Heart right ventricle (tissue), 16 donors: ENCODE measurements at regions of chr21 and their contacts with region 1.

Region 1: GRCh38 chr21:38798481-38798882 is 7.2 kb upstream of the ETS2 start:
- DNase-seq: no peak
- ATAC-seq: no peak
- H3K4me3 ChIP-seq: no peak overlapping the region
- H3K27ac ChIP-seq: no peak overlapping the region
- H3K4me1 ChIP-seq: no peaks in the 10 kb centered on the region
- H3K27me3 ChIP-seq: no peaks in the 10 kb centered on the region
- CTCF ChIP-seq: no peak

Region 2: DNA sequence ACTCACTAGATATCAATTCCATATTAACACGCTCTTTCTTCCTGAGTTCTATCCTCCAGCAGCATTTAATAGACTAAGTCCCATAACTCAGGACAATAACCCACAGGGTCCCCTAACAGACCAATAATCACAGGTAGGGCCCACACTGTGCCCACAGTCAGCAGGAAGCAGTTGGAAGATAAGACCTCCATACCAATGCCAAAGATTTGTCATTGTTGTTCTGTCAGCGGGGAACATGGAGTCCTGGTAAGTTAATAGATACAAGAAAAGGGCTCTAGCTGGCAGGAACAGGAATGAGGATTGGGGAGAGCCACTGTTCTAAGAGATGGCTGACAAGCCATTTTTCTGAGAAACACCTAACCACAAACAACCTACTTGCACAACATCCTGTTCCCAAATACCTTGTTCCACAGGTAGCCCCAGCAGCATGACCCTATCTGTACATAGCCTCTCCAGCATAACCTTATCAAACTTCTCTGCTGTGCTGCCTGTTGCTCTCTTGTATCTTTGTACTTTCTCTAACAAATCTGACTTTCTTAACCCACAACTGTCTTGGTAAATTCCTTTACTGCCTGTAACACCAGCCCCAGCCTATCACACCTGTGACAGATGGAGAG is 683.7 kb before region 1 on chr21:
- intact Hi-C with region 1: no loop called
- DNase-seq: no peak
- ATAC-seq: peak in 1 of 8 donors; percentile 59
- H3K4me3 ChIP-seq: no peak overlapping the region
- H3K27ac ChIP-seq: no peak overlapping the region
- H3K4me1 ChIP-seq: no peaks in the 10 kb centered on the region
- H3K27me3 ChIP-seq: no peaks in the 10 kb centered on the region
- CTCF ChIP-seq: no peak

Region 3: DNA sequence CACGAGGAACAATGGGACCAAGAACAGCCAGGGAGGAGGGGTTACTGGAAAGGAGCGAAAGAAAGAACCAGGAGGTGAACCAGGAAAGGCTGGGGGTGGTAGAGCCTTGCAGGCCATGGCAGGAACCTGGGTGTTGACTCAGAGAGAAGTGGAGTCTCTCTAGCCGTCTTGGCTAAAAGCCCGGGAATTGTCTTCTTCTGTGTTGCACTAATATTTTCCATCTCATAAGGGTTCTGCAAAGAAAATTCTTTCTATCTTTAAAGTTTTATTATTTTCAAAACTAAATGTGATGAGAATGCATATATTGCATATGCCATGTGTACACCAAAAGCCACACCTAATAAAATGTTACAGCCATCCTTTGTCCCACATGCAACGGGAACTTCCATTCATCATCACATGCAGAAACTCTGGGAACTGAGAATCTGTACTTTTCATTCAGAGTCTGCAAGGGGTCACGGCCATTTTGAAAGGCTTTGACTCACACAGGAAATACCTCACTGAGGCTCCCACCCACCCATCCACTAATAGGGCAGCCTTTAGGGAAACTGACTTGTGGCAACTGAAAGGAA is 338.2 kb before region 1 on chr21:
- intact Hi-C with region 1: loop called in 1 of 10 experiments (anchors 5 kb)
- DNase-seq: peak in 1 of 2 donors; percentile 56
- ATAC-seq: peak; percentile 45 to 84 (median 72)
- H3K4me3 ChIP-seq: no peak overlapping the region
- H3K27ac ChIP-seq: peak overlapping the region; percentile 35 to 85 (median 68)
- H3K4me1 ChIP-seq: peaks cover 0 to 63% (median 23%) of the 10 kb centered on the region in 9 donors
- H3K27me3 ChIP-seq: no peaks in the 10 kb centered on the region
- CTCF ChIP-seq: no peak

Region 4: GRCh38 chr21:38766987-38767722 is 31.3 kb before region 1 on chr21:
- intact Hi-C with region 1: loop called in 2 of 10 experiments (anchors 2 to 5 kb)
- DNase-seq: no peak
- ATAC-seq: peak in 6 of 8 donors; percentile 28 to 76 (median 47)
- H3K4me3 ChIP-seq: peak overlapping the region in 8 of 10 donors; percentile 4 to 40 (median 35)
- H3K27ac ChIP-seq: peak overlapping the region in 3 of 10 donors; percentile 32 to 77 (median 62)
- H3K4me1 ChIP-seq: peaks cover 0 to 19% (median 0%) of the 10 kb centered on the region in 9 donors
- H3K27me3 ChIP-seq: no peaks in the 10 kb centered on the region
- CTCF ChIP-seq: no peak